ENCODE measurements at regions of chr6 and their contacts with region 1.

Region 1: DNA sequence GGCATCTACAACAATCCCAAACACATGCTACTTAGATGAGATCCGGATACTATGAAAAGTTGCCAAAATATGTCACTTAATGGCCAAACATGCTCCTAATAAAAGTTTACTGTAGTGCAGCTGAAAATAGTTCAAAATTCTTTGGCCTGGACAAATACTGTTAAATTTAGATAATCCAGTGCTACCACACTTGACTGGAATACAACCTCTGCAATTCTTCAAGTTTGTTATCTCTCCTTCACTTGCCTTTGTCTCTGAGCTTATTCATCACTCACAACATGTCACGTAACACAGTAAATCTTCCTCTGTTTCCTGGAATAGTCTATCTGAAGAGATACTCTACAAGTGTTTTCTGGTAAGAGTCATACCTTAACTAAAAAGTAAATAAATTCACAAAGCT is 10.5 kb upstream of the PLN start:
- H3K4me3 ChIP-seq: no peak overlapping the region
- H3K27ac ChIP-seq: no peak overlapping the region
- H3K4me1 ChIP-seq: no peaks in the 10 kb centered on the region
- CTCF ChIP-seq: no peak

Region 2: GRCh38 chr6:118514689-118515088 is 22.9 kb before region 1 on chr6:
- CTCF ChIA-PET with region 1: no interaction called
- POLR2A ChIA-PET with region 1: no interaction called
- H3K4me3 ChIP-seq: no peak overlapping the region
- H3K27ac ChIP-seq: no peak overlapping the region
- H3K4me1 ChIP-seq: no peaks in the 10 kb centered on the region
- CTCF ChIP-seq: no peak

Region 3: GRCh38 chr6:120248451-120248850 is 1710.9 kb after region 1 on chr6:
- CTCF ChIA-PET with region 1: interaction called, 10 read pairs
- POLR2A ChIA-PET with region 1: no interaction called
- H3K4me3 ChIP-seq: no peak overlapping the region
- H3K27ac ChIP-seq: no peak overlapping the region
- H3K4me1 ChIP-seq: no peaks in the 10 kb centered on the region
- CTCF ChIP-seq: no peak